ENCODE measurements at regions of chr1 and their contacts with region 1.

Region 1: GRCh38 chr1:244970661-244971551 is 106.6 kb upstream of the HNRNPU start:
- DNase-seq: peak; percentile 96
- ATAC-seq: peak; percentile 84
- H3K4me3 Mint-ChIP-seq: peak overlapping the region; percentile 92
- H3K27ac Mint-ChIP-seq: peak overlapping the region; percentile 97
- H3K4me1 Mint-ChIP-seq: peaks cover 15% of the 10 kb centered on the region
- H3K27me3 Mint-ChIP-seq: no peaks in the 10 kb centered on the region

Region 2: DNA sequence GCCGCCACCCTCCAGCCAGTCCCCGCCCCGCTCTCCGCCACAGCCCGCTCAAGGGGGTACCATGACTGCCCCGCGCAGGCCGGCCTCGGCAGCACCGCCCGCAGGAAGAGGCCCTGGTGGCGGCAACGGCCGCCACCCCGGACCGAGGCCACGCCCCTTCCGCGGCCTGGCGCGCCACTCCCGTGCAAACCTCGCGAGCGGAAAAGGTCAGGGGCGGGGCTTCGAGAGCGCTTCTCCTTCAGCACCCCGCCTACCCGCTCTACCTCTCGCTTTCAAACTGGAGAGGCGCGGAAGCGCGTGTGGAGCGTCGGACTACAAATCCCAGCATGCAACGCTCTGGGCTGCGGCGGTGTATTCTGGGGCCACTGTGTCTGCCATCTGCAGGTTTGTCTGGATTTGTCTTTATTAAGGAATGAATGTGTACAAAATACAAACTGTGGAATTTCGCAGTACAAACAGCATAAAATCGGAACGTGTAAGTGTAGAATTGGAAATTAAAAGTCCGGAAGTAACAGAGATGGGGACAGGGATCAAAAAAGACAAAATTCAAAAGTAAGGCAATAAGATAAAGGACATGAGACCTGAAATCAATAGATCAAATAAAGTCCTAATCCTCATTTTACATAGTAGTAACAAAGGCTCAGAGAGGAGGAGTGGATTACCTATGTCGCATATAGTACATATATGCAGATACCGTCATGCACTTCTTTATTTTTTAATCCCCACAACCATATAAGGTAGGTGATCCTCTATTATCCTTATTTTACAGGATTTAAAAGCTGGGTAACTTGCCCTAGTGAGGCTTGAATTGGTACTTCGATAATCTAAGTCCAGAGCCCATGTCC is 518.7 kb before region 1 on chr1:
- CTCF ChIA-PET with region 1: no interaction called
- POLR2A ChIA-PET with region 1: no interaction called
- intact Hi-C with region 1: loop called (anchors 1 to 5 kb)
- DNase-seq: peak; percentile 99
- ATAC-seq: peak; percentile 91
- H3K4me3 Mint-ChIP-seq: peak overlapping the region; percentile 97
- H3K27ac Mint-ChIP-seq: peak overlapping the region; percentile 97
- H3K4me1 Mint-ChIP-seq: peaks cover 40% of the 10 kb centered on the region
- H3K27me3 Mint-ChIP-seq: no peaks in the 10 kb centered on the region

Region 3: DNA sequence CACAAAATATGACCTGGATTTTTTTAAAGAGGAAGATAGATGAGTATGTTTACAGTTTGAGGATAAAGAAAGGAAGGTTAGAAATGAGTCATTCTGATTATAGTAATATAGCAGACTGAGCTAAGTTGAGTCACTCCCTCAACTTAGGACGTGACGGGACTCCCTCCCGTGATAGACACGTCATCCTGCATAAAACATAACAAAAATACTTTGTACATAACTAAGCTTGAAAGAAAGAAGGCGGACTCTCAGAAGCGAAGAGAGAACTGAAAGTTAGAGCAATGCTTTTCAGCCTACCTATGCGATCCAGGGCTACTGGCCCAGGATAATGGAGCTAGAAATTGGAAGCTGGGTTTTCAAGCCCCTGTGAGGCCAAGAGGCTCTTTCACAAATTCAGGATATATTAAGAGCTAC is 371.0 kb before region 1 on chr1:
- CTCF ChIA-PET with region 1: interaction called, 4 read pairs
- POLR2A ChIA-PET with region 1: no interaction called
- intact Hi-C with region 1: loop called in 1 of 2 experiments (anchors 2 kb)
- DNase-seq: peak; percentile 74
- ATAC-seq: peak; percentile 96
- H3K4me3 Mint-ChIP-seq: peak overlapping the region; percentile 55
- H3K27ac Mint-ChIP-seq: peak overlapping the region; percentile 95
- H3K4me1 Mint-ChIP-seq: peaks cover 20% of the 10 kb centered on the region
- H3K27me3 Mint-ChIP-seq: peaks cover 4% of the 10 kb centered on the region

Region 4: GRCh38 chr1:244864253-244865027 is 106.5 kb before region 1 on chr1 and contains the start of gene HNRNPU:
- CTCF ChIA-PET with region 1: interaction called, 5 read pairs
- POLR2A ChIA-PET with region 1: interaction called, 12 read pairs
- intact Hi-C with region 1: loop called (anchors 1 kb)
- DNase-seq: peak; percentile 98
- ATAC-seq: peak; percentile 72
- H3K4me3 Mint-ChIP-seq: peak within 1 kb of the TSS; percentile 100
- H3K27ac Mint-ChIP-seq: peak within 1 kb of the TSS; percentile 99
- H3K4me1 Mint-ChIP-seq: peaks cover 33% of the 10 kb centered on the region
- H3K27me3 Mint-ChIP-seq: no peaks in the 10 kb centered on the region
- total RNA-seq, gene HNRNPU: 521 to 532 TPM

Region 5: GRCh38 chr1:245000872-245001188 is 29.9 kb after region 1 on chr1:
- CTCF ChIA-PET with region 1: no interaction called
- POLR2A ChIA-PET with region 1: no interaction called
- intact Hi-C with region 1: loop called in 1 of 2 experiments (anchors 1 kb)
- DNase-seq: no peak
- ATAC-seq: no peak
- H3K4me3 Mint-ChIP-seq: no peak overlapping the region
- H3K27ac Mint-ChIP-seq: no peak overlapping the region
- H3K4me1 Mint-ChIP-seq: no peaks in the 10 kb centered on the region
- H3K27me3 Mint-ChIP-seq: no peaks in the 10 kb centered on the region

Region 6: GRCh38 chr1:245216366-245217115 is 245.6 kb after region 1 on chr1:
- CTCF ChIA-PET with region 1: no interaction called
- POLR2A ChIA-PET with region 1: no interaction called
- intact Hi-C with region 1: no loop called
- DNase-seq: no peak
- ATAC-seq: no peak
- H3K4me3 Mint-ChIP-seq: no peak overlapping the region
- H3K27ac Mint-ChIP-seq: no peak overlapping the region
- H3K4me1 Mint-ChIP-seq: no peaks in the 10 kb centered on the region
- H3K27me3 Mint-ChIP-seq: no peaks in the 10 kb centered on the region

Region 7: GRCh38 chr1:246931549-246932365 is 1960.9 kb after region 1 on chr1 and contains the start of gene AHCTF1:
- CTCF ChIA-PET with region 1: no interaction called
- POLR2A ChIA-PET with region 1: no interaction called
- intact Hi-C with region 1: loop called in 1 of 2 experiments (anchors 1 kb)
- DNase-seq: peak; percentile 96
- ATAC-seq: peak; percentile 94
- H3K4me3 Mint-ChIP-seq: peak within 1 kb of the TSS; percentile 97
- H3K27ac Mint-ChIP-seq: peak within 1 kb of the TSS; percentile 94
- H3K4me1 Mint-ChIP-seq: peaks cover 28% of the 10 kb centered on the region
- H3K27me3 Mint-ChIP-seq: no peaks in the 10 kb centered on the region
- total RNA-seq, gene AHCTF1: 38.8 to 54.4 TPM